ENCODE measurements at regions of chr5 and their contacts with region 1.

Region 1: GRCh38 chr5:170571875-170572852 is 68.3 kb downstream of the KCNIP1 start:
- DNase-seq: peak; percentile 1
- H3K4me3 Mint-ChIP-seq: no peak overlapping the region
- H3K27ac Mint-ChIP-seq: peak overlapping the region; percentile 0
- H3K4me1 Mint-ChIP-seq: peaks cover 21% of the 10 kb centered on the region
- H3K27me3 Mint-ChIP-seq: peaks cover 35% of the 10 kb centered on the region

Region 2: DNA sequence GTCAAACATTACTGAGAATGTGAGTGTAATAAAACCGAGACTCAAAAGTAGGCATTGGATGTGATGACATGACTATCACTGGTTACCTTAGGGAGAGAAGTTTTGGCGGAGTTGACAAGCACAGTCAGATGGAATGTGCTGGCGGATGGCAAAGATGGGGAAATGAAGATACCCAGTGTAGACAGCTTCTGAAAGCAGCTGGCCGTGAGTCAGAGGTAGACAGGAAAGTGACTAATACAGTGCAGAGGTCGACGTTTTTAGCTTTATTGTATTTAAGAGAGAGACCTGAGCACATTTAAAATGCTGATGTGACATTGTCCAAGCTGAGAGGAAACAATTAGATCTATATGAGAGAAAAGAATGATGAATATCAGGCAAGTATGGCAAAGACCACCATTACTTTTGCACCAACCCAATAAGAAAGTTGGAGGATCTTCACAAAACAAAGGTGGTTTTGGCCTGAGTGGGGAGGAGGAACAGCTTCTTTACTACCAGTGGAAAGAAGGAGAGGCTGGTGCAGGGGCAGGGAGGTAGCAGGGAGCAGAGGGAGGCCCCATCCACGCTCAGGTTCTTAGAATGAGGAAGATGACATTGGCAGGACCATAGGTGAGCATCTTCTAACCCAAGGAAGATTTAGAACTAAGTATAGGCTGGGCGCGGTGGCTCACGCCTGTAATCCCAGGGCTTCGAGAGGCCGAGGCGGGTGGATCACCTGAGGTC is 105.0 kb before region 1 on chr5:
- intact Hi-C with region 1: loop called (anchors 1 kb)
- DNase-seq: no peak
- H3K4me3 Mint-ChIP-seq: no peak overlapping the region
- H3K27ac Mint-ChIP-seq: no peak overlapping the region
- H3K4me1 Mint-ChIP-seq: no peaks in the 10 kb centered on the region
- H3K27me3 Mint-ChIP-seq: peaks cover 13% of the 10 kb centered on the region

Region 3: GRCh38 chr5:170597109-170597751 is 25.1 kb after region 1 on chr5:
- intact Hi-C with region 1: loop called (anchors 1 kb)
- DNase-seq: no peak
- H3K4me3 Mint-ChIP-seq: no peak overlapping the region
- H3K27ac Mint-ChIP-seq: no peak overlapping the region
- H3K4me1 Mint-ChIP-seq: peaks cover 20% of the 10 kb centered on the region
- H3K27me3 Mint-ChIP-seq: peaks cover 22% of the 10 kb centered on the region

Region 4: GRCh38 chr5:170614720-170615119 is 42.6 kb after region 1 on chr5:
- intact Hi-C with region 1: no loop called
- DNase-seq: no peak
- H3K4me3 Mint-ChIP-seq: no peak overlapping the region
- H3K27ac Mint-ChIP-seq: no peak overlapping the region
- H3K4me1 Mint-ChIP-seq: peaks cover 6% of the 10 kb centered on the region
- H3K27me3 Mint-ChIP-seq: peaks cover 13% of the 10 kb centered on the region

Region 5: DNA sequence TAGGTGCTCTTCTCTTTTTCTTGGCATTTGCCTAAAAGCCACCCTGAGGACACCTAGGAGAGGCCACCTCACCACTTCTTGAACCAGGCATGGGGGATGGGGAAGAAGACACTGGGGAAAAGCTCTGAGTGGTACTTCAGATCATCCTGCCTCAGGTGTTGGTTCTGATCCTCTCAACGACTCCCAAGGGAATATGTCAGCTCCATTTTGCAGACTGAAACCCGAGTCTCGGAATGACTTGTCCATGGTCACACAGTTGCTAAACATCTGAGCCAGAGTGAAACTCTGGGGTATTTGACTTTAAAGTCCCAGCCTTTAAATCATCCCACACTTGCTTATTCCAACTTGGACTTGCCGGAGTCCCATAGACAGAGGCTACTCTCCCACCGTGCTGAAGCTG is 90.8 kb after region 1 on chr5:
- intact Hi-C with region 1: no loop called
- DNase-seq: no peak
- H3K4me3 Mint-ChIP-seq: no peak overlapping the region
- H3K27ac Mint-ChIP-seq: no peak overlapping the region
- H3K4me1 Mint-ChIP-seq: no peaks in the 10 kb centered on the region
- H3K27me3 Mint-ChIP-seq: peaks cover 7% of the 10 kb centered on the region

Measured in activated T-helper 1 cell treated with anti-CD3 and anti-CD28 coated beads, Interleukin-12 subunit alpha, Interleukin-12 subunit beta, Interleukin-2, Interleukin-4 antibody, amounts not matched to agents 30 ng/mL and 10 ng/mL and 1 ng/mL, durations not matched to agents 14 hours and 24 hours and 36 hours (primary cell).